Activated CD4-positive, alpha-beta T cell treated with anti-CD3 and anti-CD28 coated beads for 36 hours (primary cell): ENCODE measurements at regions of chr21 and their contacts with region 1.

Region 1: GRCh38 chr21:38219049-38219628 is 37.7 kb upstream of the KCNJ15 start:
- DNase-seq: peak; percentile 76
- ATAC-seq: peak; percentile 78
- H3K4me3 Mint-ChIP-seq: no peak overlapping the region
- H3K27ac Mint-ChIP-seq: no peak overlapping the region
- H3K4me1 Mint-ChIP-seq: peaks cover 8% of the 10 kb centered on the region
- H3K27me3 Mint-ChIP-seq: peaks cover 4% of the 10 kb centered on the region

Region 2: DNA sequence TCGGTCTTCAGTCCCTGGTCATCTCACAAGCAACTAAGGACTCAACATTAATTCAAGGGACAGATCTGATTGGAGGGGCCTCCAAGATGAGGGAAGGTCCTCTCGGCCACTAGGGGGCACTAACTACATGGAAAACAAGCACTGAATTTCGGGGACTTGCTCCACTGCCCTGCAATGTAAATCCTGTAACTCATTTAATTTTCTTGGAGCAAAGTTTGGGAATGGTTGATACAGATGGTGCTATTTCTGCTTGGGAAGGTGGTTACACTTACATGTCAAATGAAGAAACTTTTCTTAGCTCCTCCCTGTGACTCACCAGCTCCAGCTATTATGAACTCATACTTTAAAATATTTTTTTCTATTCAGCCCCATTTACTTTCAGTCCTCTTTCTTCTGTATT is 59.8 kb before region 1 on chr21:
- CTCF ChIA-PET with region 1: interaction called, 4 read pairs
- POLR2A ChIA-PET with region 1: no interaction called
- intact Hi-C with region 1: loop called in 1 of 2 experiments (anchors 2 kb)
- DNase-seq: peak; percentile 78
- ATAC-seq: no peak
- H3K4me3 Mint-ChIP-seq: no peak overlapping the region
- H3K27ac Mint-ChIP-seq: no peak overlapping the region
- H3K4me1 Mint-ChIP-seq: no peaks in the 10 kb centered on the region
- H3K27me3 Mint-ChIP-seq: peaks cover 15% of the 10 kb centered on the region

Region 3: DNA sequence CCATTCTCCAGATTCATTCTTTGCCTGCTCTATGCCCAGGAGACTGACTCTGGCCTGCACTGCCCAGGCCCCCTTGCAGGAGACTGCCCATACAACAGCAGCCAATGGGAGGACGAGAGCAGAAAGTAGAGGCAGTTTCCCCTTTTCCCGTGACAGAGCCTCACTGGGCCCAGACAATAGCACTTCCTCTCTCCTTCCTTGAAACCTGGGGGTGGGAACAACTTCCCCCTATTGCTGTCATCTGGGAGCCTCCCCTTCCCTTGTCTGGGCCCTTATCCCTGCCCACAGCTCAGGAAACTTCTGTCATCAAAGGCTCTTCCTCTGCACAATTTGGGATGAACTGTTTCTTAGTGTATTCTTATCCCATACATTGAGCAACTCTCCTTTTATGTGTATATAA is 23.1 kb before region 1 on chr21:
- CTCF ChIA-PET with region 1: interaction called, 15 read pairs
- POLR2A ChIA-PET with region 1: no interaction called
- intact Hi-C with region 1: no loop called
- DNase-seq: no peak
- ATAC-seq: no peak
- H3K4me3 Mint-ChIP-seq: no peak overlapping the region
- H3K27ac Mint-ChIP-seq: no peak overlapping the region
- H3K4me1 Mint-ChIP-seq: no peaks in the 10 kb centered on the region
- H3K27me3 Mint-ChIP-seq: peaks cover 8% of the 10 kb centered on the region

Region 4: GRCh38 chr21:38205940-38206339 is 13.2 kb before region 1 on chr21:
- CTCF ChIA-PET with region 1: interaction called, 15 read pairs
- POLR2A ChIA-PET with region 1: no interaction called
- intact Hi-C with region 1: no loop called
- DNase-seq: no peak
- ATAC-seq: no peak
- H3K4me3 Mint-ChIP-seq: no peak overlapping the region
- H3K27ac Mint-ChIP-seq: no peak overlapping the region
- H3K4me1 Mint-ChIP-seq: peaks cover 3% of the 10 kb centered on the region
- H3K27me3 Mint-ChIP-seq: peaks cover 18% of the 10 kb centered on the region

Region 5: DNA sequence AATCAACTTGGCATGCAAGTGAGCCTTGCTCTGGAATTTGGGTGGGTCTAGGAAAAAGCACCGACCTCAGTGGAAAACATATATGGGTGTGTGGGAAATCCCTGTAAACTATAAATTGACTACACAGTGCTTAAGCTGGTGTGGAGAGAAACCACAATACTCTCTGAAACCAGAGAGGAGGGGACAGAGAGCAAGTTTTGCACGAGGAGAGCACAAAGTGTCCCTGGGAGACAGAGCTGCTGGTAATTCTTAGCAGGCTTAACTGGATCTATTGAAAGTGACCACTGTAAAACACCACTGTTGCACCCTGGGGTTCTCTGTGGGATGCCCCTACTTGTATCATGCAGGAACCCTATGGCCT is 50.4 kb after region 1 on chr21:
- CTCF ChIA-PET with region 1: interaction called, 3 read pairs
- POLR2A ChIA-PET with region 1: no interaction called
- intact Hi-C with region 1: loop called in 1 of 2 experiments (anchors 2 kb)
- DNase-seq: no peak
- ATAC-seq: peak; percentile 64
- H3K4me3 Mint-ChIP-seq: no peak overlapping the region
- H3K27ac Mint-ChIP-seq: no peak overlapping the region
- H3K4me1 Mint-ChIP-seq: peaks cover 34% of the 10 kb centered on the region
- H3K27me3 Mint-ChIP-seq: no peaks in the 10 kb centered on the region

Region 6: GRCh38 chr21:38333301-38334272 is 114.4 kb after region 1 on chr21:
- CTCF ChIA-PET with region 1: interaction called, 5 read pairs
- POLR2A ChIA-PET with region 1: no interaction called
- intact Hi-C with region 1: loop called in 1 of 2 experiments (anchors 5 kb)
- DNase-seq: no peak
- ATAC-seq: no peak
- H3K4me3 Mint-ChIP-seq: no peak overlapping the region
- H3K27ac Mint-ChIP-seq: no peak overlapping the region
- H3K4me1 Mint-ChIP-seq: no peaks in the 10 kb centered on the region
- H3K27me3 Mint-ChIP-seq: peaks cover 2% of the 10 kb centered on the region